Head of caudate nucleus (tissue), 42 donors: ENCODE measurements at regions of chr5 and their contacts with region 1.

Region 1: GRCh38 chr5:151051066-151051930 is 29.5 kb downstream of the TNIP1 start:
- DNase-seq: peak; percentile 44 to 90 (median 76)

Region 2: GRCh38 chr5:150783422-150783928 is 267.8 kb before region 1 on chr5:
- intact Hi-C with region 1: loop called (anchors 10 kb)
- DNase-seq: peak in 4 of 42 donors; percentile 10 to 46 (median 22)

Region 3: GRCh38 chr5:151115274-151115905 is 64.1 kb after region 1 on chr5:
- intact Hi-C with region 1: loop called (anchors 5 kb)
- DNase-seq: peak; percentile 66 to 93 (median 86)

Region 4: DNA sequence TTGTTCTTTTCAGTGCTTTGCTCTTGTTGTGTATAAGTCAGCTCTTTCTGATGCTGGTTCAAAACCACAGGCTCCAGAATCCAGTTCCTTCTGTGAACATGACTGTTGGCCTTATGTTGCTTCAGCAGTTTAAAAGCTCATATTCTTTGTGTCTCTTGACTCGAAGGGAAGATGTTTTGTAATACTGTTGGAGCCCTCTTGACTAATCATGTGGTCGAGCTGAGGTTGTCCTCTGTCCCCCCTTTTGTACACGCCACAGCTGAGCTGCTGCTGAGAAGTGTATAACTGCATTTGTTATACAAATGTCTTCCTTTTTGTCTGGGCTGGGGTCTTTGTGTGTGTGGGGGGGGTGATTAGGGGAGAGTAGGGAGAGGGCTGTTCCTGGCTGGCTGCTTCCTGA is 431.9 kb after region 1 on chr5:
- intact Hi-C with region 1: no loop called
- DNase-seq: peak in 3 of 42 donors; percentile 5 to 16 (median 6)